ENCODE measurements at regions of chr4 and their contacts with region 1.

Region 1: GRCh38 chr4:168569066-168569970 is 72.5 kb downstream of the PALLD start:
- DNase-seq: no peak
- H3K4me3 Mint-ChIP-seq: no peak overlapping the region
- H3K27ac Mint-ChIP-seq: peak overlapping the region; percentile 56
- H3K4me1 Mint-ChIP-seq: no peaks in the 10 kb centered on the region
- H3K27me3 Mint-ChIP-seq: peaks cover 8% of the 10 kb centered on the region

Region 2: GRCh38 chr4:168514249-168514852 is 55.0 kb before region 1 on chr4:
- intact Hi-C with region 1: no loop called
- DNase-seq: peak; percentile 59
- H3K4me3 Mint-ChIP-seq: no peak overlapping the region
- H3K27ac Mint-ChIP-seq: no peak overlapping the region
- H3K4me1 Mint-ChIP-seq: peaks cover 26% of the 10 kb centered on the region
- H3K27me3 Mint-ChIP-seq: peaks cover 25% of the 10 kb centered on the region

Region 3: GRCh38 chr4:168585168-168586091 is 16.1 kb after region 1 on chr4:
- intact Hi-C with region 1: loop called (anchors 1 kb)
- DNase-seq: peak; percentile 65
- H3K4me3 Mint-ChIP-seq: no peak overlapping the region
- H3K27ac Mint-ChIP-seq: no peak overlapping the region
- H3K4me1 Mint-ChIP-seq: peaks cover 3% of the 10 kb centered on the region
- H3K27me3 Mint-ChIP-seq: peaks cover 23% of the 10 kb centered on the region

Measured in activated CD4-positive, alpha-beta T cell treated with anti-CD3 and anti-CD28 coated beads, Interleukin-2, amount 10 ng/mL, durations not matched to agents 24 days and 14 days (primary cell).